ENCODE measurements at regions of chr3 and their contacts with region 1.

Region 1: GRCh38 chr3:70771426-70772147 is 459.1 kb upstream of the MDFIC2 start:
- DNase-seq: no peak
- H3K4me3 Mint-ChIP-seq: no peak overlapping the region
- H3K27ac Mint-ChIP-seq: no peak overlapping the region
- H3K4me1 Mint-ChIP-seq: peaks cover 5% of the 10 kb centered on the region
- H3K27me3 Mint-ChIP-seq: peaks cover 33% of the 10 kb centered on the region

Region 2: DNA sequence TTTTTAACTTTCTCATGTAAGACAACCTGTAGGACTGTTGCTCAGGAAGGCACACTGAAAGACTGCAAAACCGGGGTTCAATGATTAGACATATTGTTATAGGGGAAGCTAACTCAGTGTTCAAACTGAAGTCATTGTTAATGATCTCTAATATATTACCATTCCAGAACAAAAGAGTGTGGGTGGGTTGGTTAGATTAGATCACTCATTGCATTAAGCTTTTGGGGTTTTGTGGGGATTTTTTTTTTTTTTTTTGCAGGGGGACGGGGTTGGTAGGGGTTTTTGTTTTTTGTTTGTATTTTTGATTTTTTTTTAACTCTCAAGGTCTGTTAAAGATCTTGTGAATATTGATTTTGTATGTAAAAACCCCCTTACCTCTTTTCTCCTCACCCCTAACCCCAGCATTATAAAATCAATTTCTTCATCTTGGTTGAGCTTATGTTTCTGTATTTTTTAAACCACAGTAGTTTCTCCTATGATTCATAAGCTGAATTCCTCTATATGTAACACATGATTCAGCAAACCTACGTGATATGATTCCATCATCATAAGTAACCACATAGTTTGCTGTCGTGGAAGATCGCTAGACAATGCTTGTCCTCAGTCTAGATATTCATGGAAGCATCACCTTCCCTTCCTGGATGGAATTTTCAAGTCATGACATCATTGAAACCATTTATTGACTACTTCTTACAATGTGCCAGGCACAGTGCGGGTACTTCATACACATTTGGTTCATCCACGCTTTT is 85.0 kb after region 1 on chr3:
- CTCF ChIA-PET with region 1: no interaction called
- POLR2A ChIA-PET with region 1: no interaction called
- intact Hi-C with region 1: loop called (anchors 2 kb)
- DNase-seq: no peak
- H3K4me3 Mint-ChIP-seq: no peak overlapping the region
- H3K27ac Mint-ChIP-seq: no peak overlapping the region
- H3K4me1 Mint-ChIP-seq: peaks cover 17% of the 10 kb centered on the region
- H3K27me3 Mint-ChIP-seq: peaks cover 15% of the 10 kb centered on the region

Region 3: GRCh38 chr3:70982700-70983140 is 211.1 kb after region 1 on chr3:
- CTCF ChIA-PET with region 1: no interaction called
- POLR2A ChIA-PET with region 1: no interaction called
- intact Hi-C with region 1: loop called (anchors 5 kb)
- DNase-seq: peak; percentile 70
- H3K4me3 Mint-ChIP-seq: peak overlapping the region; percentile 57
- H3K27ac Mint-ChIP-seq: peak overlapping the region; percentile 99
- H3K4me1 Mint-ChIP-seq: peaks cover 64% of the 10 kb centered on the region
- H3K27me3 Mint-ChIP-seq: no peaks in the 10 kb centered on the region